MCF 10A (cell line): ENCODE measurements at regions of chr7 and their contacts with region 1.

Region 1: GRCh38 chr7:99631295-99632109 is 14.8 kb downstream of the ZSCAN25 start:
- DNase-seq: peak; percentile 61
- H3K4me3 Mint-ChIP-seq: no peak overlapping the region
- H3K27ac Mint-ChIP-seq: peak overlapping the region; percentile 84
- H3K4me1 Mint-ChIP-seq: peaks cover 21% of the 10 kb centered on the region
- H3K27me3 Mint-ChIP-seq: no peaks in the 10 kb centered on the region
- CTCF ChIP-seq: peak; percentile 64

Region 2: DNA sequence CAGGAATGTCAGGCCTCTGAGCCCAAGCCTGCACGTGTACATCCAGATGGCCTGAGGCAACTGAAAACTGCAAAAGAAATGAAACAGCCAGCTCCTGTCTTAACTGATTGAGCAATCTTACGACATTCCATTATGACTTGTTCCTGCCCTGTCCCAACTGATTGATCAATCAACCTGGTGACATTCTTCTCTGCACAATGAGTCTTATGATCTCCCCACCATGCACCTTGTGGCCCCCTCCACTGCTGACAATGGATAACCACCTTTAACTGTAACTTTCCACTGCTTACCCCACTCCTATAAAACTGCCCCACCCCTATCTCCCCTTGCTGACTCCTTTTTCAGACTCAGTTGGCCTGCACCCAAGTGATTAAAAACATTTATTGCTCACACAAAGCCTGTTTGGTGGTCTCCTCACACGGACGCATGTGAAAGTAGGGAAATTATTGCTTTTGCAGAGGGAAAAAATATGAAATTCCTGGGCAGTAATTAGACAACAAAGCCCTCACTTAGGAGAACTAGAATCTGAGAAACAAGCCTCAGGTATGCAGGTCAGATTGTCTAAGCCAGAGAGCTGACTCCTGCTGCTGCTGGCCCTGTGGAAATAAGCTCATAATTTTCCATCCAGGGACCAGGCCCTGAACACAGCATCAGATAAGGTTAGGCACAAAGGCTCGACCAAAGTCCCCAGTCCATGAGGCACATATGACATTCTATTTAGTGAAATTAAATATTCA is 98.2 kb after region 1 on chr7:
- CTCF ChIA-PET with region 1: interaction called, 4 read pairs
- POLR2A ChIA-PET with region 1: interaction called, 43 read pairs
- intact Hi-C with region 1: no loop called
- DNase-seq: peak; percentile 85
- H3K4me3 Mint-ChIP-seq: no peak overlapping the region
- H3K27ac Mint-ChIP-seq: no peak overlapping the region
- H3K4me1 Mint-ChIP-seq: no peaks in the 10 kb centered on the region
- H3K27me3 Mint-ChIP-seq: no peaks in the 10 kb centered on the region
- CTCF ChIP-seq: no peak

Region 3: GRCh38 chr7:99752390-99752789 is 120.9 kb after region 1 on chr7:
- CTCF ChIA-PET with region 1: no interaction called
- POLR2A ChIA-PET with region 1: interaction called, 25 read pairs
- intact Hi-C with region 1: no loop called
- DNase-seq: no peak
- H3K4me3 Mint-ChIP-seq: peak overlapping the region; percentile 37
- H3K27ac Mint-ChIP-seq: peak overlapping the region; percentile 9
- H3K4me1 Mint-ChIP-seq: peaks cover 24% of the 10 kb centered on the region
- H3K27me3 Mint-ChIP-seq: no peaks in the 10 kb centered on the region
- CTCF ChIP-seq: no peak

Region 4: GRCh38 chr7:99822731-99823718 is 191.5 kb after region 1 on chr7:
- CTCF ChIA-PET with region 1: interaction called, 3 read pairs
- POLR2A ChIA-PET with region 1: interaction called, 54 read pairs
- intact Hi-C with region 1: no loop called
- DNase-seq: no peak
- H3K4me3 Mint-ChIP-seq: no peak overlapping the region
- H3K27ac Mint-ChIP-seq: no peak overlapping the region
- H3K4me1 Mint-ChIP-seq: peaks cover 24% of the 10 kb centered on the region
- H3K27me3 Mint-ChIP-seq: peaks cover 13% of the 10 kb centered on the region
- CTCF ChIP-seq: no peak

Region 5: GRCh38 chr7:99829524-99830160 is 198.1 kb after region 1 on chr7:
- CTCF ChIA-PET with region 1: interaction called, 47 read pairs
- POLR2A ChIA-PET with region 1: interaction called, 54 read pairs
- intact Hi-C with region 1: no loop called
- DNase-seq: no peak
- H3K4me3 Mint-ChIP-seq: no peak overlapping the region
- H3K27ac Mint-ChIP-seq: no peak overlapping the region
- H3K4me1 Mint-ChIP-seq: peaks cover 45% of the 10 kb centered on the region
- H3K27me3 Mint-ChIP-seq: no peaks in the 10 kb centered on the region
- CTCF ChIP-seq: no peak

Region 6: DNA sequence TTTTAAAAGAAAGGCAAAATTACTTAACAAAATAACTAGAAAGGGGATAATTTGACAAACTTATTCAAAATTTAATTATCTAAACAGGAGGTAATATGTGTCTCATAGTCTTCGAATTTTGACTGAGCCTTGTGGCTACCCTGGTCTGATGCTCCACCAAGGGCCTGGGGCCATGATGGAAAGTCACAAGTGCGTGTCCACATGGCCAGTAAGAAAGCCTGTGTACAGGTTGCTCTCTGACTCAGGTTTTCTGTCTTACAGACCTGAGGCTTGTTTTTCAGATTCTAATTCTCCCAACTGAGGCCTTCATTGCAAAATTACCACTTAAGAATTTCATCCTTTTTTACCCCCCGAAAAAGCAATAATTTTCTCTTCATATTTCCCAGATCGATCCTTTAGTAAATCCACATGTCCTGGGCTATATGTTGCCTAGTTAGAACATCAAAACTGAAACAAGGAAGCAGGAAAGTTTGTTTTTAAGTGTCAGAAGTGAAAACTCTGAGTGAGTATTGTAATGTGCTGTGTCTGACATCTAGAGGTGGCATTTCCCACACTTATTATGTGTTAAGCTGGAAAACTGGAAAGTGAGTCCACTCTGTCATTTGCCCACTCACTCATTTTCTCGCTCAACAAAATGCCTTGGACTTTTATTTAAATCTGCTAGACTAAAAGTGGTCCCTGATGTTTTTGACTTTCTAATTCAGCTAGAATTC is 206.3 kb after region 1 on chr7:
- CTCF ChIA-PET with region 1: interaction called, 53 read pairs
- POLR2A ChIA-PET with region 1: interaction called, 37 read pairs
- intact Hi-C with region 1: loop called (anchors 1 kb)
- DNase-seq: peak; percentile 30
- H3K4me3 Mint-ChIP-seq: no peak overlapping the region
- H3K27ac Mint-ChIP-seq: peak overlapping the region; percentile 36
- H3K4me1 Mint-ChIP-seq: peaks cover 7% of the 10 kb centered on the region
- H3K27me3 Mint-ChIP-seq: no peaks in the 10 kb centered on the region
- CTCF ChIP-seq: peak; percentile 48